ENCODE measurements at regions of chrX and their contacts with region 1.

Region 1: GRCh38 chrX:17374619-17375366 is at the start of gene NHS:
- DNase-seq: peak; percentile 40
- H3K4me3 Mint-ChIP-seq: peak within 1 kb of the TSS; percentile 24
- H3K27ac Mint-ChIP-seq: no peak within 1 kb of the TSS
- H3K4me1 Mint-ChIP-seq: peaks cover 11% of the 10 kb centered on the region
- H3K27me3 Mint-ChIP-seq: peaks cover 21% of the 10 kb centered on the region
- total RNA-seq, gene NHS: 7.8 to 8.9 TPM

Region 2: DNA sequence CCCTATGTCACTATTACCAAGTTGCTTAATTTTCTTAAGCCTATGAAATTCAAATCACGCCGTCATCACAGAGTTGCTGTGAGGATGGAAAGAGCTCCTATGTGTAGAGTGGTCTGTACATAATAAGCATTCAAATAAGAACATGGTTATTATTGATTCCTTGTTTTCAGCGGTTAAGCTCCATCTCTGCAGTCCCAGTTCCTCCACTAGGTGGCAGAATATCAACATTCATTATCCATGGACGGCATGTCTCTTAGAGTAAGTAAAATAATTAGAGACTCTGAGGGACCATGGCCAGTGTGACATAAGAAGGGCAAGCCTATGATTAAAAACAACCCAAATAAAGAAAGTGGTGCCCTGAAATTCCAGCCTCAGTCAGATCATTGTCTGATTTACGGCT is 132.3 kb before region 1 on chrX:
- CTCF ChIA-PET with region 1: interaction called, 3 read pairs
- intact Hi-C with region 1: loop called (anchors 10 kb)
- DNase-seq: peak; percentile 59
- H3K4me3 Mint-ChIP-seq: no peak overlapping the region
- H3K27ac Mint-ChIP-seq: no peak overlapping the region
- H3K4me1 Mint-ChIP-seq: no peaks in the 10 kb centered on the region
- H3K27me3 Mint-ChIP-seq: no peaks in the 10 kb centered on the region

Region 3: DNA sequence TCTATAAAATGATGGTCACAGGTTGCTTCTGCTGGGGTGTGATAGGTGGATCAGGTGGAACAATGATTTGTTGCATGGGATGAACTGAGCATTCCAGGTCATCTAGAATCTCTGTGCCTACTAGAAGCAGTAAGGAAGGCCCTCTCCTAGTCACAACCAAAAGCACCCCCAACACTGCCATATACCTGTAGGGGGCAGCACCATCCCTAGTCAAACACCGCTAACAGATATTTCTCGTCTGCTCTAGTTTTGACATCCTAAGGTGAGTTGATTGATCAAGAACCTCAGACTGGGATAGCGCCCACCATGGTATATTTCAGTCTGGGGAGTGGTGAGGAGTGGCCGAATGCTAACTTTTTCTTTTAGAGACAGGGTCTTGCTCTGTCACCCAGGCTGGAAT is 160.4 kb after region 1 on chrX:
- CTCF ChIA-PET with region 1: no interaction called
- intact Hi-C with region 1: loop called (anchors 5 kb)
- DNase-seq: peak; percentile 73
- H3K4me3 Mint-ChIP-seq: no peak overlapping the region
- H3K27ac Mint-ChIP-seq: peak overlapping the region; percentile 18
- H3K4me1 Mint-ChIP-seq: peaks cover 28% of the 10 kb centered on the region
- H3K27me3 Mint-ChIP-seq: no peaks in the 10 kb centered on the region

Region 4: GRCh38 chrX:17655211-17656034 is 280.6 kb after region 1 on chrX:
- CTCF ChIA-PET with region 1: no interaction called
- intact Hi-C with region 1: loop called (anchors 5 kb)
- DNase-seq: peak; percentile 26
- H3K4me3 Mint-ChIP-seq: peak overlapping the region; percentile 88
- H3K27ac Mint-ChIP-seq: peak overlapping the region; percentile 91
- H3K4me1 Mint-ChIP-seq: peaks cover 21% of the 10 kb centered on the region
- H3K27me3 Mint-ChIP-seq: no peaks in the 10 kb centered on the region

Measured in activated naive CD4-positive, alpha-beta T cell treated with anti-CD3 and anti-CD28 coated beads for 36 hours (primary cell).